ENCODE measurements at regions of chr14 and their contacts with region 1.

Region 1: GRCh38 chr14:59438195-59438647 is 27.0 kb downstream of the GPR135 start:
- DNase-seq: no peak
- H3K4me3 ChIP-seq: no peak overlapping the region
- H3K27ac ChIP-seq: no peak overlapping the region
- H3K4me1 ChIP-seq: no peaks in the 10 kb centered on the region
- H3K27me3 ChIP-seq: no peaks in the 10 kb centered on the region
- CTCF ChIP-seq: no peak
- EP300 ChIP-seq: no peak
- POLR2A ChIP-seq: no peak
- RAD21 ChIP-seq: no peak

Region 2: DNA sequence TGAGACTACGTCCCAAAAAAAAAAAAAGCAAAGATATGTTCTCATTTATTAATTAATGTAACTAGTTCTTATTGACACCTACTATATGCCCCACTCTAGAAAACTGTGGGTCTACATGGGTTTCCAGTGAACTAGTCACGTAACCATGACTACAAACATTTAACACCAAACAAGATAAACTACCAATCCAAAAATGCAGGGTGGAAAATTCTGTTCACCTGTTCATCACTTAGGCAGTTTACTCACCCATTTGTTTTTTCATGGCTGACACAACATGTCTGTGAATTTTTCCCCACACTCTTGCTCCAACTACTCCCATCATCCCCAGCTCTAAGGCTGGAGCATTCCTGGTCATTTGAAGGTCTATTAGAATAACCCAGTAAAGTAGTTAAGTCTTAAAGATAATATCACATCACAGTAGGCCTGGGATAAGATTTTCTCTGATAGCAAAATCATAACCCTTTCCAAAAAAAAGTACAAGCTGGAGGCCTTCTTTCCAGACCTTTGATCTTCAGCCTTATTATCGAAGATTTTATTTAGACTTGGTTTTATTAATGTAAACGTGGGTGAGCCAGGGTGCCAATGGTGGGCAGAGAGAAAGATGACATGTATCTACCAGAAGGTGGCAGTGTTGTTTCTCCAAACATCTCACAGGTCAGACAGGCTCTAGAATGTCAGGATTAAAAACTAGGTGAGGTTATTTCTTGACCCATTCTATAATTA is 311.4 kb before region 1 on chr14:
- CTCF ChIA-PET with region 1: interaction called, 66 read pairs
- POLR2A ChIA-PET with region 1: no interaction called
- DNase-seq: no peak
- H3K4me3 ChIP-seq: no peak overlapping the region
- H3K27ac ChIP-seq: no peak overlapping the region
- H3K4me1 ChIP-seq: no peaks in the 10 kb centered on the region
- H3K27me3 ChIP-seq: no peaks in the 10 kb centered on the region
- CTCF ChIP-seq: peak; percentile 28 to 70 (median 66)
- EP300 ChIP-seq: no peak
- POLR2A ChIP-seq: no peak
- RAD21 ChIP-seq: peak; percentile 94

Region 3: DNA sequence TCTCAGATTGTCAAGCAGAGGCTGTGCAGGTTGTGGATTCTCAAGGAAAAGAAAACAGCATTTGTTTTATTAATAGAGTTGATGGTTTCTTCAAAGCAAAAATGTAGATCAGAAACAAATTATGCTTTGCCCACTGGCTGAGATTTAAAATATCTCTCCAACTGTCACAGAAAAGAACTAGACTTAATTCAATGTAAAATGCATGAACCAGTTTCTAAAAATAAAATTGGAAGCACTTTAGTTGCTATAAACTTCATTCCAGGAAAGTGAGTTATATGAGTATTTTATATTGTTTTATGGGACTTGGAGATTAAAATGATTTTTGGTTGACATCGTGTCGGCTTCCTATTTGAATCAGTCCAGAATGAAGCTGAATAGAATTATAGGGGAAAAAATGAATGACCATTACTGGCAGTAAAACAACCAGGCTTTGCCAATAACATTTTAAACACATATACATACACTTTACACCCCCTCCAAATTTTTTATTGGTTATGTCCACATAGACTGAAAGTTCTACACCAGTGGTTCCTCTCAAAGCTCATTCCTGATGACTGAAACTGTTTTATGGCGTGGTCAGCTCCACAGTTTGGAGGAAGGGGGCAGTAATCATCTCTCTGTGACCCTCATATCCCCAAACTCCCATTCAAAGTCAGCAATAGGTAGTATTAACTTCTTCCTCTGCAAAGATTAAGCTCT is 305.3 kb before region 1 on chr14:
- CTCF ChIA-PET with region 1: interaction called, 47 read pairs
- POLR2A ChIA-PET with region 1: no interaction called
- DNase-seq: no peak
- H3K4me3 ChIP-seq: no peak overlapping the region
- H3K27ac ChIP-seq: no peak overlapping the region
- H3K4me1 ChIP-seq: no peaks in the 10 kb centered on the region
- H3K27me3 ChIP-seq: no peaks in the 10 kb centered on the region
- CTCF ChIP-seq: peak; percentile 13 to 39 (median 14); a peak in 3 of 4 replicates
- EP300 ChIP-seq: no peak
- POLR2A ChIP-seq: no peak
- RAD21 ChIP-seq: peak; percentile 53 to 61

Region 4: DNA sequence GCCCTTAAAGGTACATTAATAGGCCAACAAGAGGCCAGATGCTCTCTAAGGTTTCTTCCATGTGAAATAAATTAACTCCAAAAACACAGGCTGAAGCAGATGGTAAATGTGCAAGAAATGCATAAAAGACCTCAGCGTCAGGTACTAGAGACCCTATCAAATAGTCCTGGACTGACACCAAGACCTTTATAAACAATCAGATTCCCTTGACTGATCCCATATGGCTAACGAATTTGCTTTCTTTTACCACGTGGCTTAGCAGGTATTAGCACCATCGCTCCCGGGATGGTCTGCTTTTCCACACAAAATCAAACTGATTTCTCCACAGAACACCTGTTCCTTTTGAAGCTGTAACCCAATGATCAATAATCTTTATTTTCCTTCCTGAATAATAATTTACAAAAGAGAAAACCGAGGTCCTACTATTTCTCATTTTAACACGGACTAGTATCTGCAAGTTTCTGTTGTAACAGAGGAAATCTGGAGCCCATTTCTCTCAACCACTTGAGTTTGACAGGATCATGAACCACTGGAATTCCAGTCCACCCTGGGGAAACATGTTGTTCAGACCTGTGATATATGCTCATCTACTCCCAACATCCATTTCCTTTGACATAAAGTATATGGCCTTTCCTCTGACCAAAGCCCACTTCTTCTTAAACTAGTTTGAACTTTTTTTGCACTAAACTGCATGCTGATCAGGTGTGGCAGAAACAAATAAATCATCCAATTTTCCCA is 297.9 kb before region 1 on chr14:
- CTCF ChIA-PET with region 1: interaction called, 11 read pairs
- POLR2A ChIA-PET with region 1: no interaction called
- DNase-seq: no peak
- H3K4me3 ChIP-seq: no peak overlapping the region
- H3K27ac ChIP-seq: no peak overlapping the region
- H3K4me1 ChIP-seq: no peaks in the 10 kb centered on the region
- H3K27me3 ChIP-seq: no peaks in the 10 kb centered on the region
- CTCF ChIP-seq: no peak
- EP300 ChIP-seq: no peak
- POLR2A ChIP-seq: no peak
- RAD21 ChIP-seq: no peak

Region 5: GRCh38 chr14:59360923-59361794 is 77.1 kb before region 1 on chr14:
- CTCF ChIA-PET with region 1: interaction called, 10 read pairs
- POLR2A ChIA-PET with region 1: no interaction called
- DNase-seq: no peak
- H3K4me3 ChIP-seq: no peak overlapping the region
- H3K27ac ChIP-seq: no peak overlapping the region
- H3K4me1 ChIP-seq: peaks cover 0 to 4% (median 2%) of the 10 kb centered on the region in 4 experiments; a peak in 3 of 7 replicates
- H3K27me3 ChIP-seq: no peaks in the 10 kb centered on the region
- CTCF ChIP-seq: no peak
- EP300 ChIP-seq: no peak
- POLR2A ChIP-seq: no peak
- RAD21 ChIP-seq: no peak

Measured in H1 (cell line).